ENCODE measurements at regions of chr1 and their contacts with region 1.

Region 1: DNA sequence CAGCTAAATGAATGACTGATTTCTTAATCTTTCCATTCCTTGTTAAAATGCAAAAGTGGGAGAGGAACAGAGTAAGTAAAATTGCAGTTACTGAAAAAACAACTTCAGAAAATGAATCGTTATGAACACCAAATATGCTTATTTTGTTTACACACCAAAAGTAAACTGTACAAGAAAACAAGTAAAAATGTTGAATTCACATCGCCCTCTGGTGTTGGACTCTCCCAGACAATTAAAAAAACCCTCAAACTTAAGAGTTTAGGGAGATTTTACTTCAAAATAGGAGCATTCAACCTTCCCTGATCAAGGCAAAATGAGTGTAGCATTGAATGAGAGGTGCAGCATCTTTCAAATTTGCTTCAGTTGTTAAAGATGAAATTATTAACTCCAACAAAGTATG is 19.4 kb upstream of the ESRRG start:
- DNase-seq: peak; percentile 13
- H3K4me3 Mint-ChIP-seq: no peak overlapping the region
- H3K27ac Mint-ChIP-seq: no peak overlapping the region
- H3K4me1 Mint-ChIP-seq: no peaks in the 10 kb centered on the region
- H3K27me3 Mint-ChIP-seq: no peaks in the 10 kb centered on the region
- CTCF ChIP-seq: peak; percentile 37

Region 2: GRCh38 chr1:215824245-215824644 is 918.4 kb before region 1 on chr1:
- CTCF ChIA-PET with region 1: no interaction called
- intact Hi-C with region 1: loop called (anchors 2 kb)
- DNase-seq: peak; percentile 21
- H3K4me3 Mint-ChIP-seq: no peak overlapping the region
- H3K27ac Mint-ChIP-seq: no peak overlapping the region
- H3K4me1 Mint-ChIP-seq: no peaks in the 10 kb centered on the region
- H3K27me3 Mint-ChIP-seq: no peaks in the 10 kb centered on the region
- CTCF ChIP-seq: peak; percentile 57

Region 3: DNA sequence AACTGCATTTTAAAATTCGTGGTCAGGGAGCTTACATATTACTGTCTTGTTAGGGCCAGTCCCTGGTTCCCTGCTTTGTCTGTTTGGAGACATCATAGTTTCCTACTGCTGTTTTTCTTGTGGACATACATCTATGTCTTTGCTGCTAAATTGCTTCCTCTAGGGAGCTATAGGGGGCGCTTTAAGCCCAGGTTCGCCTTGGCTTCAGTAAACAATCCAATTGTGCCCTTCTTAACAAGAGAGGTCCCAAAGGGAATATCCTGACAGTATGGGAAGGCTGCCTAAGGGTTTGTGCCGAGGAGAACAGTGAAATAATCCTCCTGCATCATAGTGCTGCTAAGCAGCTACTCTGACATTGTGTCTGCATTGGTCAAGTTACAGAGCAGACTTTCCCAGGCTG is 431.8 kb before region 1 on chr1:
- CTCF ChIA-PET with region 1: no interaction called
- intact Hi-C with region 1: loop called (anchors 2 kb)
- DNase-seq: peak; percentile 24
- H3K4me3 Mint-ChIP-seq: no peak overlapping the region
- H3K27ac Mint-ChIP-seq: no peak overlapping the region
- H3K4me1 Mint-ChIP-seq: peaks cover 13% of the 10 kb centered on the region
- H3K27me3 Mint-ChIP-seq: no peaks in the 10 kb centered on the region
- CTCF ChIP-seq: peak; percentile 29

Region 4: GRCh38 chr1:217660353-217661062 is 917.9 kb after region 1 on chr1:
- CTCF ChIA-PET with region 1: no interaction called
- intact Hi-C with region 1: loop called (anchors 10 kb)
- DNase-seq: no peak
- H3K4me3 Mint-ChIP-seq: no peak overlapping the region
- H3K27ac Mint-ChIP-seq: no peak overlapping the region
- H3K4me1 Mint-ChIP-seq: peaks cover 13% of the 10 kb centered on the region
- H3K27me3 Mint-ChIP-seq: no peaks in the 10 kb centered on the region
- CTCF ChIP-seq: no peak